Transverse colon (tissue), 4 donors: ENCODE measurements at regions of chr1 and their contacts with region 1.

Region 1: DNA sequence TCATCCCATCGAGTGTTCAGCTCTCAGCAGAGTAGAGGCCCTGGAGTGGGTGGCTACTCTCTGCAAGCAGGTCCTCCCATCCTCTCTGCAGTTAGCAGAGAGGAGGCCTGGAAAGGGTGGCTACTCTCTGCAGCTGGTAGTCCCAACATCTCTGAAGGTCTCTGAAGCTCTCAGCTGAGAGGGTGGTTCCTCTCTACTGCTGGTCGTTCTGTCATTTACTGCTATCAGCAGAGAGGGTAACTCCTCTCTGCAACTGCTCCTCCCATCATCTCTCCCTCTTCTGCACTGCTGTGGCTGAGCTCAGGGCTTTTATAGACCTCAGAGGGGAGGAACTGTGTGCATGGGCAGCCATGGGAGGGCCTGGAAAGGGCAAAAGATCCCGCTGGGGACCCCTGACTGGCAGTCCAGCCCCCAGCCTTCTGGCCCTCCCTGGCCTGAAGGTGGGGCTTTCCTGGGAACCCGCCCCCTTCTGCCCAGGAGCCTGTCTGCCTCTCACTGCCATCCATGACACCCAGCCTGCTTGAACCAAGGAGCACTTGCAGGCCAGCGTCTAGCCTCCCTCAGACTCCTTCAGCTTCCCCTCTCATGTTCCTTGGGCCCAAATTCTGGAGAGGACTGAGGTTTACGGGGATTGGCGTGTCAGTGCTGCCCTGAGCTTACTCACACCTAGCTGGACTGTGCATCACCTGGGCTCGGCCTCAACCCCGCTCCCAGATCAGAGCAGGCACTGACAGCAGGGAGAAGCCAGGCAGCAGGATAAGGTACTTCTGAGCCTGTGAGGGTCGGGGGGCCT is 898.3 kb upstream of the NEGR1 start:
- DNase-seq: no peak
- H3K4me3 ChIP-seq: no peak overlapping the region
- H3K27ac ChIP-seq: no peak overlapping the region
- H3K4me1 ChIP-seq: no peaks in the 10 kb centered on the region
- H3K27me3 ChIP-seq: no peaks in the 10 kb centered on the region
- CTCF ChIP-seq: no peak
- EP300 ChIP-seq: no peak
- POLR2A ChIP-seq: no peak

Region 2: GRCh38 chr1:72997624-72998023 is 183.0 kb before region 1 on chr1:
- in situ Hi-C with region 1: no loop called
- intact Hi-C with region 1: no loop called
- DNase-seq: no peak
- H3K4me3 ChIP-seq: no peak overlapping the region
- H3K27ac ChIP-seq: no peak overlapping the region
- H3K4me1 ChIP-seq: no peaks in the 10 kb centered on the region
- H3K27me3 ChIP-seq: no peaks in the 10 kb centered on the region
- CTCF ChIP-seq: no peak
- EP300 ChIP-seq: no peak
- POLR2A ChIP-seq: no peak

Region 3: GRCh38 chr1:73009938-73010337 is 170.7 kb before region 1 on chr1:
- in situ Hi-C with region 1: no loop called
- intact Hi-C with region 1: no loop called
- DNase-seq: no peak
- H3K4me3 ChIP-seq: no peak overlapping the region
- H3K27ac ChIP-seq: no peak overlapping the region
- H3K4me1 ChIP-seq: no peaks in the 10 kb centered on the region
- H3K27me3 ChIP-seq: no peaks in the 10 kb centered on the region
- CTCF ChIP-seq: no peak
- EP300 ChIP-seq: no peak
- POLR2A ChIP-seq: no peak

Region 4: GRCh38 chr1:73162564-73162963 is 18.0 kb before region 1 on chr1:
- in situ Hi-C with region 1: no loop called
- intact Hi-C with region 1: loop called (anchors 1 kb)
- DNase-seq: no peak
- H3K4me3 ChIP-seq: no peak overlapping the region
- H3K27ac ChIP-seq: no peak overlapping the region
- H3K4me1 ChIP-seq: no peaks in the 10 kb centered on the region
- H3K27me3 ChIP-seq: no peaks in the 10 kb centered on the region
- CTCF ChIP-seq: no peak
- EP300 ChIP-seq: no peak
- POLR2A ChIP-seq: no peak